ENCODE measurements at regions of chr7 and their contacts with region 1.

Region 1: GRCh38 chr7:101688183-101688831 is 59.2 kb upstream of the MYL10 start:
- DNase-seq: peak in 1 of 2 experiments; percentile 98
- H3K4me3 ChIP-seq: peak overlapping the region in 1 of 4 experiments; percentile 43; a peak in 2 of 8 replicates
- H3K27ac ChIP-seq: no peak overlapping the region
- H3K4me1 ChIP-seq: no peaks in the 10 kb centered on the region; a peak in 2 of 7 replicates
- H3K27me3 ChIP-seq: peaks cover 0 to 2% (median 0%) of the 10 kb centered on the region in 4 experiments; a peak in 1 of 7 replicates
- CTCF ChIP-seq: peak; percentile 84 to 91 (median 86)
- EP300 ChIP-seq: no peak
- POLR2A ChIP-seq: no peak
- RAD21 ChIP-seq: peak; percentile 91 to 93

Region 2: GRCh38 chr7:101669307-101669706 is 19.0 kb before region 1 on chr7:
- CTCF ChIA-PET with region 1: interaction called, 10 read pairs
- POLR2A ChIA-PET with region 1: no interaction called
- DNase-seq: no peak
- H3K4me3 ChIP-seq: no peak overlapping the region
- H3K27ac ChIP-seq: no peak overlapping the region
- H3K4me1 ChIP-seq: peaks cover 0 to 12% (median 6%) of the 10 kb centered on the region in 4 experiments; a peak in 6 of 7 replicates
- H3K27me3 ChIP-seq: no peaks in the 10 kb centered on the region
- CTCF ChIP-seq: peak; percentile 50 to 77 (median 70)
- EP300 ChIP-seq: no peak
- POLR2A ChIP-seq: no peak
- RAD21 ChIP-seq: peak; percentile 33 to 63; a peak in 3 of 4 replicates

Region 3: DNA sequence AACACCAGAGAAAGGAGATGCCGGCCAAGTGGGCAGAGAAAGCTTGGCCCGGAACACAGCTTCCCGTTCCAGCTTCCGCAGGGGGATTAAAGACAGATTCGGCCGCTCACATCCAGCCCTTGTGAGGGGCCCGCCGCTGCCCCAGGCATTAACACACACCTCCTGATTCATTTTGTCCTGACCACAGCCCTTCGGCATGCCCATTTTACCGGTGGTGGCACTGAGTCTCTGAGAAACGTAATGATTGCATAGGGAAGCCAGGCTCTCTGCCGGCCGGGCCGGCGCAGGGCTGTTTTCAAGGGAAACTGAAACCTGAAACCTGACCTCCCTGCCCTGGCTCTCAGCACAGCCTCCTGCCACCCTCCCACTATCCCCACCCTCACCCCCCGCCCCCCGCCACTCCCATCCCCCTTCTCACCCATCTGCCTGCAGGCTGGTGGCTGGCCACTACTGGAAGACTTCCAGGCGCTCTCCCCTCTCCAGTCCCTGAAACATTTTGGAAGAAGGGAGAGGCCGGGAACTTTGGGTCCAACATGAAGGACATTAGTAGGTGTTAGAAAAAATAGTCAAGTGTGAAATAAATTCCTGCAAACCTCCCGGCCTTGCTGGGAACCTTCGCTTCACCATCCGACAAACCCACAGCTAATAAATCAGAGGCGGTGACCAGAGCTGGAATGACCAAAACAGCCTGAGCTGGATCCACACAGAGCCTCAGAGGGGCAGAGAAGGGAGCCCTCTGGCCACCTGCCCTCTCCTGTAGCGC is 45.6 kb after region 1 on chr7:
- CTCF ChIA-PET with region 1: interaction called, 11 read pairs
- POLR2A ChIA-PET with region 1: no interaction called
- DNase-seq: peak in 1 of 2 experiments; percentile 71
- H3K4me3 ChIP-seq: peak overlapping the region in 1 of 4 experiments; percentile 31; a peak in 1 of 8 replicates
- H3K27ac ChIP-seq: 0 out of 2 replicates have a peak overlapping the region, but pooled peaks have one; percentile 38
- H3K4me1 ChIP-seq: peaks cover 3 to 13% (median 7%) of the 10 kb centered on the region in 4 experiments; a peak in 5 of 7 replicates
- H3K27me3 ChIP-seq: no peaks in the 10 kb centered on the region
- CTCF ChIP-seq: no peak
- EP300 ChIP-seq: no peak
- POLR2A ChIP-seq: no peak
- RAD21 ChIP-seq: no peak

Region 4: GRCh38 chr7:101990811-101991418 is 302.6 kb after region 1 on chr7:
- CTCF ChIA-PET with region 1: no interaction called
- POLR2A ChIA-PET with region 1: no interaction called
- DNase-seq: no peak
- H3K4me3 ChIP-seq: no peak overlapping the region
- H3K27ac ChIP-seq: no peak overlapping the region
- H3K4me1 ChIP-seq: peaks cover 4 to 13% (median 9%) of the 10 kb centered on the region in 4 experiments; a peak in 6 of 7 replicates
- H3K27me3 ChIP-seq: no peaks in the 10 kb centered on the region
- CTCF ChIP-seq: no peak
- EP300 ChIP-seq: no peak
- POLR2A ChIP-seq: no peak
- RAD21 ChIP-seq: no peak

Measured in H1 (cell line).